Endothelial cell of umbilical vein (primary cell): ENCODE measurements at regions of chr4 and their contacts with region 1.

Region 1: DNA sequence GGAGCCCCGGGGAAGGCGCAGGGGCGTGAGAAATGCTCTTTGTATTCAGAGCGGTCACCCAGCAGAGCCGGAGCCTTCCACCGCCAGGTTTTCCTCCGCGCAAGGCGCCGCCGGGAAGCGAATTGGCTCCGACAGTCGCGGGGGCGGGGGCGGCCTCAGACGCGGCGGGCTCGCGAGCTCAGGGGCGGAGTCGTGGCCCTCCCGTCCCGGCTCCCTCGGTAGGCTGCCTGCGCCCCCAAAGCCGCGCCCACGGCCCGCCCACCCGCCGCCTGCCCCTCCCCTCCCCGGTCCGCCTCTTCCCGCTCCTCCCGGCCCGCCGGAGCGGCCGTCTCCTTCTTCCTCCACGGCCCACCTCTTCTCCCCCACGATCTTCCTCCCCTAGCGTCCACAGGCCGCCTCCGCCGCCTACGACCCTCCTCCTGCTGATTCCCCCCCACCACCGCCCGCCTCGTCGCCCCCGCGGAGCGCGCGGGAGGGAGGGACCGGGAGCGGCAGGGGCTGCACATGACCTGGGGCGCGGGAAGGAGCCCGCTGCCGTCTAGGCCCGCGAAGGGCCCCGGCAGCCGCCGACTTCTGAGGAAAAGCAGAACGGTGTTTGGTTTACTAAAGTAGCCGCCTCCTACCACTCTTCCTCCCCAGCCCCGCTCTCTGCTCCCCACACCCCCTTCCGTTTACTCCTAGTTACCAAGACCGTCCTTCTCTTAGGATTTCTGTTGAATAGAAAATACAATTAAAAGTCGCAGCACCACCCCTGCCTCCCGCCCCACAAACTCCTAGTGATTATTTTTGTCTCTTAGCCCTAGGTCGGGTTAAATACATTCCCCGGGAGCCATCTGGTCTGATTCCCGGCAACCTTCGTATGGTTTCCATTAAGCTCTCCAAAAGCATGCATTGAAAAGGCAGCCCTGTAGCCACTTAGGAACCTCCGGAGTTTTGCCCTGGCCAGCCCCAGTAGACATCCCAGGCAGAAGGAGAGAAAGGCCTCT is 53.2 kb downstream of the C4orf51 start:
- DNase-seq: peak; percentile 97
- H3K4me3 ChIP-seq: peak overlapping the region; percentile 38 to 69 (median 51)
- H3K27ac ChIP-seq: peak overlapping the region; percentile 94
- H3K4me1 ChIP-seq: peaks cover 42% of the 10 kb centered on the region
- H3K27me3 ChIP-seq: no peaks in the 10 kb centered on the region
- CTCF ChIP-seq: no peak
- POLR2A ChIP-seq: peak; percentile 73

Region 2: DNA sequence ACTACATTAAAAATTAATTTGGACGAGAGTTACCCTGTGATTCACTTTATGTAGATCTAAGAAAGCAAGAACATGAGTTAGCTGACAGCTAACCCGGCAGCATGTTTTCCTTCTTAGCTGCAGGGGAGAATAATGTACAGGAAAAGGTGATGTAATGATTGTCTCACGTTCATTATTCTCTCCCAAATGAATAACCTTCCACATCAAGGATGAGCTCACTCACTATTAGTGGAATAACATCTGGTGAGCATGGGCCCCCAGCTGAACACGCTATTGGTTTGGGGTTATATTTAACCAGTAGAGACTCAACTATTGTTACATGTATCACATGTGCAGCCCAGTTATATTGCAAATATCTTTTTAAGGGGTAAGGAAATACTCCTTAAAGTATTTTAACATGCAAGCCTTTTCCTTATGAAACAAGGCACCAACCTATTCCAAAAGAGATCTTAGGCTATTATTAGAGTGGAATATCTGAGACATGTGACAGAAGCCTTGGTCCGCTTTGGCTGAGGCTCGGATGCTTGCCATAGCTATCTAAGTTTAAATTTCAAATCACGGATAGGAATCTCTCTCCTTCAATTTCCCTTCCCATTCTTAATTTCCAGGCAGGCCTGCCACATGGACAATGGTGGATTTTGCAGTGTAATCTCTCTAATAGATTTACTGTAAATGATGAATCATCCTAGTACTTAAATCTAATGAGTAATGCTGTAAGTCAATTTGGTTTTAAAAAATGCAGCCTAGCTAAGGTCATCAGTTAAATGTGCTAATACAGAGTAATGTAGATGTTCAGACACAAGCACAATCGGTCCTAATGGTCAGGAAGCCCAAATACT is 453.8 kb before region 1 on chr4:
- CTCF ChIA-PET with region 1: no interaction called
- POLR2A ChIA-PET with region 1: no interaction called
- dilution Hi-C with region 1: no loop called
- intact Hi-C with region 1: loop called (anchors 1 kb)
- DNase-seq: peak; percentile 84
- H3K4me3 ChIP-seq: no peak overlapping the region
- H3K27ac ChIP-seq: peak overlapping the region; percentile 97
- H3K4me1 ChIP-seq: peaks cover 38% of the 10 kb centered on the region
- H3K27me3 ChIP-seq: no peaks in the 10 kb centered on the region
- CTCF ChIP-seq: no peak
- POLR2A ChIP-seq: no peak

Region 3: DNA sequence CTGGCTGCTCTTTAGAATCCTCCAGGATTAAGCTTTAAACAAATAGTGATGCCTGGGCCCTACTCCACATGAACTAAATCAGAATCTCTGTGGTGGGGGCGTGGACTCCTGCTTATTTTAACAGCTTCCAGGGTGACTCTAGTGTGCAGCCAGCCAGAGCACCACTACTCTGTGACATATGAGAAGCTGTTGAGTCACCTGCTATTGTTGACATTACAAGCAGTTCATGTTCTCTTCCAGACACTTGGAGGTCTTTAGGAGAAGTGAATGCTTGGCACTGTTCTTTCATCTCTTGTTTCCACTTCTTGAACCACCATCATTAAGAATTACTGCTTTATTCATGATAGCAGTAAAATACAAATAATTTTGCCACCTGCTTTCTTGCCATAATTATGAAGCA is 53.7 kb before region 1 on chr4:
- CTCF ChIA-PET with region 1: no interaction called
- POLR2A ChIA-PET with region 1: no interaction called
- dilution Hi-C with region 1: no loop called
- intact Hi-C with region 1: loop called (anchors 1 kb)
- DNase-seq: peak; percentile 66
- H3K4me3 ChIP-seq: no peak overlapping the region
- H3K27ac ChIP-seq: peak overlapping the region; percentile 13
- H3K4me1 ChIP-seq: peaks cover 10% of the 10 kb centered on the region
- H3K27me3 ChIP-seq: no peaks in the 10 kb centered on the region
- CTCF ChIP-seq: no peak
- POLR2A ChIP-seq: no peak

Region 4: GRCh38 chr4:145808021-145808650 is 74.9 kb after region 1 on chr4:
- CTCF ChIA-PET with region 1: interaction called, 4 read pairs
- POLR2A ChIA-PET with region 1: no interaction called
- dilution Hi-C with region 1: no loop called
- intact Hi-C with region 1: loop called (anchors 1 kb)
- DNase-seq: peak; percentile 93
- H3K4me3 ChIP-seq: no peak overlapping the region
- H3K27ac ChIP-seq: peak overlapping the region; percentile 82
- H3K4me1 ChIP-seq: peaks cover 44% of the 10 kb centered on the region
- H3K27me3 ChIP-seq: no peaks in the 10 kb centered on the region
- CTCF ChIP-seq: no peak
- POLR2A ChIP-seq: no peak

Region 5: DNA sequence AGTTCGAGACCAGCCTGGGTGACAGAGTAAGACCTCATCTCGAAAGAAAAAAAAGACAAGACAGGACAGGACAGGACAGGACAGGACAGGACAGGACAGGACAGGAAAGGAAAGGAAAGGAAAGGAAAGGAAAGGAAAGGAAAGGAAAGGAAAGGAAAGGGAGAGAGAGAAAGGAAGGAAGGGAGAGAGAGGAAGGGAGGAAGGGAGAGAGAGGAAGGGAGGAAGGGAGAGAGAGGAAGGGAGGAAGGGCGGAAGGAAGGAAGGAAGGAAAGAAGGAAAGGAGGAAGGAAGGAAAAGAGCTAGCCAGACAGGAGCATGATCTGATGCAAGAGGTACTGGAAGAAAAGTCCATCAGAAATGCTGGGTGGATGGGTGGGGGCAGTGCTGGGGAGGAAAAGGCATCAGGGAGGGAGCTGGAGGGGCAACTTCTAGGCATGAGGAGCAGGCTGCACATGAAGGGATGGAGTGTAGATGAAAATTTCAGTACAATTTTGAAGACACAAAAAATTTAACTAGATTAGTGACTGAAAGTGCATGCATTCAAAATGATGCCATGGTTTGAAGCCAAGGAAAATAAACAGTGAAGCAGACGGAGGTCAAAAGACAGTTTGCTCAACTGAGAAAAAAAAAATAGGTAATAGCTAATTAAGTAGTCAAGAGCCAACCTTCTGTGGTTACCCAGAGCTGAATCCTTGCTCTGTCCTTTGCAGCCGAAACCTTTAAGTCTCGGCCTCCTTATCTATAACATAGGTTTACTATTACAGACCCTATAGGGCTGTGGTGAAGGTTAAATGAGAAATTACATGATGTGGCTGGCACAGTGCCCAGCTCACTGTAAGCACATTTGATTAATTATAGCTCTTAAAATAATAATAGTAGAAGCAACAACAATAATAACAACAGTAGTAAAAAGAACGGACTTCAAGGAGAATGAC is 145.6 kb after region 1 on chr4:
- CTCF ChIA-PET with region 1: interaction called, 4 read pairs
- POLR2A ChIA-PET with region 1: no interaction called
- dilution Hi-C with region 1: no loop called
- intact Hi-C with region 1: loop called (anchors 1 kb)
- DNase-seq: peak; percentile 75
- H3K4me3 ChIP-seq: no peak overlapping the region
- H3K27ac ChIP-seq: no peak overlapping the region
- H3K4me1 ChIP-seq: peaks cover 12% of the 10 kb centered on the region
- H3K27me3 ChIP-seq: no peaks in the 10 kb centered on the region
- CTCF ChIP-seq: no peak
- POLR2A ChIP-seq: no peak

Region 6: DNA sequence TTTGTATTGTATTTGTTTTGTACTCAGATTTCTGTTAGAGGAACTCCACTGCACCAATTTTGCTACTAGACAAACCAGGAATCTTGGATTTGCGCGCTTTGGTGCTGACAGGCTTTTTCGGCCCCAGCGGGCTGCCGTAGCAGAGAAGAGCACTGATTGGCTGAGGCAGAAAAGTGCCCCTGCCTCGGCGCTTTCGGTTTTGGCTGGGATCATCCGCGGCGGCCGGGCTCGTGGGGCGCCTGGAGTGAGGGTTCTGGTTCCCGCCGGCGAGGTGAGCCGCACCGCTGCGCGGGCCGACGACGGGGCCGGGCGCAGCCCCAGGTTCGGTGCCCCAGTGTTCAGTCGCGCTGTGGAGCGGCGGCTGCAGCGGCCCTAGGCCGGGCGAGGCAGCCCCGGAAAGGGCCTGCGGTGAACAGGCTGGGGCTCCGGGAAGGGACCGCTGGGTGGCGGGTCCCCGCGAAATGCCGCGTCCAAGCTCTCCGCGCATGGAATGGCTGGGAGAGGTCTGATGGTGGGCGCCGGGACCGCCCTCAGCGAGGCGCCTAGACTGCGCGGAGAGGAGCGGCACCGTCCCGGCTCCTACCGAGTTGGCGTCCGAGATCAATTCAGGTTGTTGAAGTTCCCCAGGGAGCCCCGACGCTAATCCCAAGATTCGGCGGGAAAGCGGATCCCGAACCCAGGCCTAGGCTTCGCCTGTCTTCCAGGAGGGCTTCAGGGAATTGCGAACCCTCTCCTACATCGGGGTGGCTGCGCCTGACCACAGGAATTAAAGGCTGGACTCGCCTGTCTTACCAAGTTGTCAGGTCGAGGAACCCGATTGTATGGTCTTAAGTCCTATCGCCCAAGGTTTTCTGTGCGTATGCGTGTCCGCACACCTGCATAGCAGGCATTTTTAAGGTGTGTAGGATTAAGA is 442.6 kb after region 1 on chr4 and contains the start of gene LSM6:
- CTCF ChIA-PET with region 1: no interaction called
- POLR2A ChIA-PET with region 1: no interaction called
- dilution Hi-C with region 1: no loop called
- intact Hi-C with region 1: loop called (anchors 5 kb)
- DNase-seq: peak; percentile 86
- H3K4me3 ChIP-seq: peak within 1 kb of the TSS; percentile 63 to 80 (median 72)
- H3K27ac ChIP-seq: peak within 1 kb of the TSS; percentile 65
- H3K4me1 ChIP-seq: peaks cover 10% of the 10 kb centered on the region
- H3K27me3 ChIP-seq: no peaks in the 10 kb centered on the region
- CTCF ChIP-seq: peak in 1 of 2 donors; percentile 1
- POLR2A ChIP-seq: peak; percentile 53
- total RNA-seq, gene LSM6: 34.7 and 43.1 TPM in 2 replicates